B cell (primary cell): ENCODE measurements at regions of chr6 and their contacts with region 1.

Region 1: GRCh38 chr6:26156076-26156849 is 69.0 kb downstream of the HFE start:
- DNase-seq: peak; percentile 95
- ATAC-seq: peak; percentile 58
- H3K4me3 ChIP-seq: peak overlapping the region; percentile 75 to 95 (median 93)
- H3K4me3 Mint-ChIP-seq: peak overlapping the region; percentile 89
- H3K27ac ChIP-seq: peak overlapping the region; percentile 87 to 88
- H3K27ac Mint-ChIP-seq: peak overlapping the region; percentile 96
- H3K4me1 ChIP-seq: peaks cover 23 to 32% of the 10 kb centered on the region in 2 donors
- H3K4me1 Mint-ChIP-seq: peaks cover 34% of the 10 kb centered on the region
- H3K27me3 ChIP-seq: no peaks in the 10 kb centered on the region
- H3K27me3 Mint-ChIP-seq: no peaks in the 10 kb centered on the region
- CTCF ChIP-seq: no peak

Region 2: GRCh38 chr6:25116506-25116905 is 1039.8 kb before region 1 on chr6:
- CTCF ChIA-PET with region 1: no interaction called
- POLR2A ChIA-PET with region 1: interaction called, 15 read pairs
- intact Hi-C with region 1: no loop called
- DNase-seq: no peak
- ATAC-seq: no peak
- H3K4me3 ChIP-seq: no peak overlapping the region
- H3K4me3 Mint-ChIP-seq: no peak overlapping the region
- H3K27ac ChIP-seq: no peak overlapping the region
- H3K27ac Mint-ChIP-seq: no peak overlapping the region
- H3K4me1 ChIP-seq: no peaks in the 10 kb centered on the region
- H3K4me1 Mint-ChIP-seq: peaks cover 9% of the 10 kb centered on the region
- H3K27me3 ChIP-seq: no peaks in the 10 kb centered on the region
- H3K27me3 Mint-ChIP-seq: no peaks in the 10 kb centered on the region
- CTCF ChIP-seq: no peak

Region 3: DNA sequence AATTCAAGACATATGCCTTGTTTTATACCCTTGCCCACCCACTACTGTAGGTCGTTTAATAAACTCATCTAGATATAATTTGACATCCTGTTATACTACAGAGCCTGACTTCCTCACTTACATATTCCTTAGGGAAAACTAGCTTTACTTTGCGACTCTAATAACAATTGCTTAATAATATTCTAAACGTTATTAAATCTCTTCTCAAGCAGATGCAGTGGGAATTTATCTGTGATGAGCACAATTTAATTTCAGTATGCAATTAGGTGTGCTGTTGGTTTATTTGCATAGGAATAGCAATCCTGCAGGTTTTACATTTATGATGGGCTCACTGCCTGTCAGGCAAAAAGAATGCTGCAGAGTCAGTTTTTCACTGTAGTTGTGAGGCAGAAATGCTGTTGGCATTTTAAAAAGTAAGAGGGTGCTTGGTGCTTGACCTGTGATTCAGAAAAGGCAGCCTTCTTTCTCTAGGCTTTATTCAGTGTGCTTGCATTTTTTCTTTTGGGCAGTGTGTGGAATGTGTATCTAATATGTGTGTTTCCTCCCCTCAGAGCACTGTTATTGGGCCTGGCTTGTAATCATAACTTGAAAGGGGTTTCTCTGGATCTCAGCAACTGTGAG is 656.5 kb before region 1 on chr6:
- CTCF ChIA-PET with region 1: no interaction called
- POLR2A ChIA-PET with region 1: no interaction called
- intact Hi-C with region 1: no loop called
- DNase-seq: no peak
- ATAC-seq: no peak
- H3K4me3 ChIP-seq: no peak overlapping the region
- H3K4me3 Mint-ChIP-seq: no peak overlapping the region
- H3K27ac ChIP-seq: no peak overlapping the region
- H3K27ac Mint-ChIP-seq: no peak overlapping the region
- H3K4me1 ChIP-seq: no peaks in the 10 kb centered on the region
- H3K4me1 Mint-ChIP-seq: no peaks in the 10 kb centered on the region
- H3K27me3 ChIP-seq: no peaks in the 10 kb centered on the region
- H3K27me3 Mint-ChIP-seq: no peaks in the 10 kb centered on the region
- CTCF ChIP-seq: no peak

Region 4: DNA sequence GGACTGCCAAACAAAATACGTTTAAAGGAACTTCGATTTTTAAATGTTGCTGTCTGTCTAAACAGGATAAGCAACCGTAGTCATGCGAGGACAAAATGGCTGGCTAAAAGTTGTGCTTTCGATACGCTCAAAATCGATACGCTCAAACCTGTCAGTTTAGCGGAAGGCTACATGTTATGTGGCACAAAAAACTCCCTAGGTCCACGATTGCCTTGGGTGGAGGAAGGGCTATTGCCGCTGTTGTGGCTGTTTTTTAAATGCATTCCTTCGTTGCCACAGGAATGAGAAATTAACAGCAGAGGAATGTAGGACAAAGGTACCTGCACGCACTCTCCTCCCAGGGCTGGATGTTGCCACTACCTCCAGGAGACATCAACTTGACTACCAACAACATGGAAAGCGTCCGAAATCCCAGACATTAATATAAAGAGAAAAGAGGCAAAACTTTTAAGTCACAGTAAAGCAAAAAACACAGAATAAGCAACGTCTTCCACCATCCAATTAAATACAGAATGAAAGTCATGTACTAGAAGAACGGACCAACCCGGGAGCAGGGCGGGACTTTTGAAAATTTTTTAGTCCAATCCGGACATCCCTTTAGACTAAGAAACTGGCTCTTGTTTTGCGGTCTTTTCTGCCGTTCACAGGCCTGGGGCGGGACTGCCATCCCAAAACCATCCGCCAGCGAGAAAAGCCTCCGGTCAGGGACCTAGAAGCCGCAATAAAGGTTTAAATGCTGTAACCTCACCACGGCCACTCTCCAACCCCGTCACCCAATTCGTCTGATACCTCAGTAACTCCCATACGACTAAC is 101.2 kb before region 1 on chr6:
- CTCF ChIA-PET with region 1: interaction called, 7 read pairs
- POLR2A ChIA-PET with region 1: interaction called, 70 read pairs
- intact Hi-C with region 1: loop called (anchors 2 kb)
- DNase-seq: peak; percentile 93
- ATAC-seq: peak; percentile 65
- H3K4me3 ChIP-seq: peak overlapping the region; percentile 69 to 100 (median 94)
- H3K4me3 Mint-ChIP-seq: peak overlapping the region; percentile 96
- H3K27ac ChIP-seq: peak overlapping the region; percentile 80 to 91
- H3K27ac Mint-ChIP-seq: peak overlapping the region; percentile 97
- H3K4me1 ChIP-seq: peaks cover 12 to 16% of the 10 kb centered on the region in 2 donors
- H3K4me1 Mint-ChIP-seq: peaks cover 15% of the 10 kb centered on the region
- H3K27me3 ChIP-seq: no peaks in the 10 kb centered on the region
- H3K27me3 Mint-ChIP-seq: no peaks in the 10 kb centered on the region
- CTCF ChIP-seq: no peak

Region 5: GRCh38 chr6:26183581-26184366 is 27.5 kb after region 1 on chr6:
- CTCF ChIA-PET with region 1: interaction called, 10 read pairs
- POLR2A ChIA-PET with region 1: interaction called, 113 read pairs
- intact Hi-C with region 1: loop called (anchors 2 kb)
- DNase-seq: peak; percentile 84
- ATAC-seq: peak; percentile 89
- H3K4me3 ChIP-seq: peak overlapping the region; percentile 51 to 73 (median 71)
- H3K4me3 Mint-ChIP-seq: peak overlapping the region; percentile 91
- H3K27ac ChIP-seq: peak overlapping the region in 1 of 2 donors; percentile 61
- H3K27ac Mint-ChIP-seq: peak overlapping the region; percentile 85
- H3K4me1 ChIP-seq: peaks cover 13 to 22% of the 10 kb centered on the region in 2 donors
- H3K4me1 Mint-ChIP-seq: peaks cover 25% of the 10 kb centered on the region
- H3K27me3 ChIP-seq: no peaks in the 10 kb centered on the region
- H3K27me3 Mint-ChIP-seq: no peaks in the 10 kb centered on the region
- CTCF ChIP-seq: no peak

Region 6: GRCh38 chr6:26234421-26235296 is 78.4 kb after region 1 on chr6:
- CTCF ChIA-PET with region 1: no interaction called
- POLR2A ChIA-PET with region 1: interaction called, 63 read pairs
- intact Hi-C with region 1: no loop called
- DNase-seq: peak; percentile 87
- ATAC-seq: peak; percentile 76
- H3K4me3 ChIP-seq: peak overlapping the region; percentile 70 to 99 (median 85)
- H3K4me3 Mint-ChIP-seq: peak overlapping the region; percentile 93
- H3K27ac ChIP-seq: peak overlapping the region; percentile 86 to 90
- H3K27ac Mint-ChIP-seq: peak overlapping the region; percentile 95
- H3K4me1 ChIP-seq: peaks cover 13 to 21% of the 10 kb centered on the region in 2 donors
- H3K4me1 Mint-ChIP-seq: peaks cover 23% of the 10 kb centered on the region
- H3K27me3 ChIP-seq: no peaks in the 10 kb centered on the region
- H3K27me3 Mint-ChIP-seq: no peaks in the 10 kb centered on the region
- CTCF ChIP-seq: no peak

Region 7: GRCh38 chr6:26285143-26286134 is 129.2 kb after region 1 on chr6:
- CTCF ChIA-PET with region 1: no interaction called
- POLR2A ChIA-PET with region 1: interaction called, 32 read pairs
- intact Hi-C with region 1: loop called (anchors 1 kb)
- DNase-seq: peak; percentile 99
- ATAC-seq: peak; percentile 76
- H3K4me3 ChIP-seq: peak overlapping the region; percentile 52 to 99 (median 71)
- H3K4me3 Mint-ChIP-seq: peak overlapping the region; percentile 90
- H3K27ac ChIP-seq: peak overlapping the region; percentile 93 to 97
- H3K27ac Mint-ChIP-seq: peak overlapping the region; percentile 95
- H3K4me1 ChIP-seq: peaks cover 17 to 18% of the 10 kb centered on the region in 2 donors
- H3K4me1 Mint-ChIP-seq: peaks cover 33% of the 10 kb centered on the region
- H3K27me3 ChIP-seq: no peaks in the 10 kb centered on the region
- H3K27me3 Mint-ChIP-seq: peaks cover 3% of the 10 kb centered on the region
- CTCF ChIP-seq: no peak

Region 8: DNA sequence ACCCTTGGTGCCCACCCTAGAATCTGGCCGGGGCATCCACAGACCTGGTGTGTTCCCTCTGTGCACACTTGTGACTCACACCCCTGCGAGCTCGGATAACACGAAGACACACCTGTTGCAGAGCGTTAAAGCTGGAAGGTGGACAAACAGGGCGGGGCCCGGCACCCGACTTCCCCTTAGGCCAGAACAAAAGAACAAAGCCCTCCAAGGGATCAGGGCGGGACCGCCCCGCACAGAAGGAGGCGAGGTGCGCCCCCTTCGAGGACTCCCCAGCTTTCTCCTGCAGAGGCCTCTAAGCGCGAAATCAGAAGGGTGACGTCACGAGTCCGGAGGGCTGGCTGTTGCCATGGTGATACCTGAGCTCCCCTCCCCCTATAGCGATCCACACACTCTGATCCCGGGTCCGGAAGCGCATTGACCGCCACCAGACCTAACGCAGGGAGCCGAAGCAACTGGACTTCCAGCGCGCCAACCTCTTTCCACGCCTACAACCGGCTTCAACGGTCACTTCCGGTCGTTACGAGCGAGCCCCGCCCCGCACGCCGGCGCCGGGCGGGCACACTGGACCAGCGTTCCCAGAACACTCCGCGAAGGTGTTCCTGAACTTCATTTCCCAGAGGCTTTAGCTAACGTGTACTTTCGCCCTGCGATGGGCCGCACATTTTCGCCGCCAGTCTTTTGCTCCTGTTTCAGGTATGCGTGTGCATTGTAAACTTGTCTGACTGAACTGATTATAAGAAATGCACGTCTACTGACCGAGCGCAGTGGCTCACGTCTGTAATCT is 1316.5 kb after region 1 on chr6 and contains the start of gene ZNF184:
- CTCF ChIA-PET with region 1: no interaction called
- POLR2A ChIA-PET with region 1: interaction called, 3 read pairs
- intact Hi-C with region 1: loop called (anchors 10 kb)
- DNase-seq: peak; percentile 96
- ATAC-seq: peak; percentile 92
- H3K4me3 ChIP-seq: peak within 1 kb of the TSS; percentile 75 to 93 (median 83)
- H3K4me3 Mint-ChIP-seq: peak within 1 kb of the TSS; percentile 100
- H3K27ac ChIP-seq: peak within 1 kb of the TSS; percentile 89 to 97
- H3K27ac Mint-ChIP-seq: peak within 1 kb of the TSS; percentile 99
- H3K4me1 ChIP-seq: peaks cover 16 to 22% of the 10 kb centered on the region in 2 donors
- H3K4me1 Mint-ChIP-seq: peaks cover 44% of the 10 kb centered on the region
- H3K27me3 ChIP-seq: no peaks in the 10 kb centered on the region
- H3K27me3 Mint-ChIP-seq: no peaks in the 10 kb centered on the region
- CTCF ChIP-seq: peak; percentile 31
- total RNA-seq, gene ZNF184: 11.8 TPM in 2 replicates

Region 9: DNA sequence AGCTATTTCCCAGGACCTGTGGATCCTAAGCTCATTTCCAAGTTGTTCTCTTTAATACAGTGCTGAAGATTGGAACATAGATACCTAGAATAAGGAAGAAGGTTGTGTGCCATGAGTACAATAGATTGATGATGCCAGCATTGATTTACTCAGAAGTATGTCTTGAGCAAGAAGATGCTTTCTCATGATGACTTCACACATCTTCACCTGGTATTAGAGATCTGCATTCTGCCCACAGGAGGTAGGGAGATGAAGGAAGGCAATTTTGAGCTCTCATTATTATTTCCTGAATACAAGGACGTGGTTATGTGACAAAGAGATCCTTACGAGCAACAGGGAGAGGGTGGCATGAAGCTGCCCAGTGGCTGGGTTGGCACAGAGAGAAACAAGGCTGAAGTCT is 1904.1 kb after region 1 on chr6:
- CTCF ChIA-PET with region 1: no interaction called
- POLR2A ChIA-PET with region 1: no interaction called
- intact Hi-C with region 1: no loop called
- DNase-seq: no peak
- ATAC-seq: no peak
- H3K4me3 ChIP-seq: no peak overlapping the region
- H3K4me3 Mint-ChIP-seq: no peak overlapping the region
- H3K27ac ChIP-seq: no peak overlapping the region
- H3K27ac Mint-ChIP-seq: no peak overlapping the region
- H3K4me1 ChIP-seq: no peaks in the 10 kb centered on the region
- H3K4me1 Mint-ChIP-seq: no peaks in the 10 kb centered on the region
- H3K27me3 ChIP-seq: peaks cover 0 to 6% (median 1%) of the 10 kb centered on the region in 4 experiments
- H3K27me3 Mint-ChIP-seq: peaks cover 34% of the 10 kb centered on the region
- CTCF ChIP-seq: no peak